H1 (cell line): ENCODE measurements at regions of chr1 and their contacts with region 1.

Region 1: GRCh38 chr1:209875515-209875914 is 47.7 kb downstream of the UTP25 start:
- DNase-seq: no peak
- H3K4me3 ChIP-seq: no peak overlapping the region
- H3K27ac ChIP-seq: no peak overlapping the region
- H3K4me1 ChIP-seq: no peaks in the 10 kb centered on the region
- H3K27me3 ChIP-seq: no peaks in the 10 kb centered on the region
- CTCF ChIP-seq: peak; percentile 31 to 59 (median 44)
- EP300 ChIP-seq: no peak
- POLR2A ChIP-seq: no peak
- RAD21 ChIP-seq: peak; percentile 55 to 64

Region 2: DNA sequence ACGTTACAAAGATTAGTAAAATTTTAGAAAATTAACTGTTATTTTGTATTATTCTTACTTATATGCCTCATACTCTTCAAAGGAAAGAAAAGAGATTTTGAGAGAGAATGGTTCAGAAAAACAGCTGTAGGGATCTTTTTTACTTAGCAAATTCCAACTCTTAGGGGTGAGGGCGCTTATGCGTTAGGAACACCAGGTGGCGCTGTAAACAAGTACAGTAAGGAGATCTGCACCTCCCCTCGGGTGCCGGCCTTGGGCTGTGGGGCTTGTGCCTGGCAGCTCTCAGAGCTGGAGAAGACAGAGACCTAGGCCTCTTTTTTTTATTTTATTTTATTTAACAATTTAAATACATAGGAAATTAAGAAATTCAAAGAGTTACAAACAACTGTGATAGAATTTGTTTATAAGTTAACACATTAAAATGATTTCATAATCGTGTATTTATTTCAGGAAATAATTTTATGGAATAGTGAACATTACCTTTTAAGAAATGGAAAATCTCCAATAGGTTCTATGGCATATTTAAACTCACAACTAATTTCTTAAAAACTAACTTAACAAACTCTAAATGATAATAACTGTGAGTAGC is 15.1 kb before region 1 on chr1:
- CTCF ChIA-PET with region 1: interaction called, 58 read pairs
- POLR2A ChIA-PET with region 1: no interaction called
- DNase-seq: peak in 1 of 2 experiments; percentile 82
- H3K4me3 ChIP-seq: no peak overlapping the region
- H3K27ac ChIP-seq: no peak overlapping the region
- H3K4me1 ChIP-seq: peaks cover 12 to 22% (median 17%) of the 10 kb centered on the region in 4 experiments
- H3K27me3 ChIP-seq: no peaks in the 10 kb centered on the region
- CTCF ChIP-seq: peak; percentile 65 to 88 (median 78)
- EP300 ChIP-seq: no peak
- POLR2A ChIP-seq: no peak
- RAD21 ChIP-seq: peak; percentile 86 to 90

Region 3: DNA sequence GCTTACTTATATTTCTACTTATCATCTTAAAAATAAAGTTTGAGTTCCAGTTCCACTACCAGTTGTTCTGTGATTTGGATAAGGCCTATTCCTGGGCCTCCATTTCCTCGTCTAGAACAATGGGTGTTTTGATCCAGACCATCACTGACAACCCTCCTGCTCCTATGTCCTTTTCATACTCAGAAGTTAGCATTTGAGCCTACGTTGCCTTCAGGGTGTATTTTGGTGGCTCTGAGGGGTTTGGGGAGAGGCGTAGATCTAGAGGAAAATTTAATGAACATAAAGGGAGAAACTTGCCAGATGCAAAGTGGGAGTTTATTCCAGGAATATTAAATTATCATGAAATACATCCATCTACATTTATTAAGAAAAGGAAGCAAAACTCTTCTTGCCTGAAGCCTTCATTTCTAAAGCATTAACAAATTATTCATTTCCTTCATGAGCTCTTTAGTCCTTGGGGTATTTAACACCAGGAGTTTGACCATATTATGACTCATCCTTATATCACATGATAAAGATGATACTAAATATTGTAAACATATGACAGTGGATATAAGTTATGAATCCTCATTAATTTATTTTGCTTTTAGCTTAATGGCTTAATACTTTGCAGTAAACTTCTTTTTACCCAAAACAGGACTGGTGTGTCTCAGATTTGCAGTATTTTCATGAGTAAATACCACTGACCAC is 15.3 kb after region 1 on chr1:
- CTCF ChIA-PET with region 1: interaction called, 11 read pairs
- POLR2A ChIA-PET with region 1: no interaction called
- DNase-seq: no peak
- H3K4me3 ChIP-seq: no peak overlapping the region
- H3K27ac ChIP-seq: no peak overlapping the region
- H3K4me1 ChIP-seq: no peaks in the 10 kb centered on the region
- H3K27me3 ChIP-seq: no peaks in the 10 kb centered on the region
- CTCF ChIP-seq: no peak
- EP300 ChIP-seq: no peak
- POLR2A ChIP-seq: no peak
- RAD21 ChIP-seq: no peak

Region 4: GRCh38 chr1:210061992-210062391 is 186.5 kb after region 1 on chr1:
- CTCF ChIA-PET with region 1: no interaction called
- POLR2A ChIA-PET with region 1: no interaction called
- DNase-seq: no peak
- H3K4me3 ChIP-seq: no peak overlapping the region
- H3K27ac ChIP-seq: no peak overlapping the region
- H3K4me1 ChIP-seq: no peaks in the 10 kb centered on the region
- H3K27me3 ChIP-seq: no peaks in the 10 kb centered on the region
- CTCF ChIP-seq: no peak
- EP300 ChIP-seq: no peak
- POLR2A ChIP-seq: no peak
- RAD21 ChIP-seq: no peak

Region 5: DNA sequence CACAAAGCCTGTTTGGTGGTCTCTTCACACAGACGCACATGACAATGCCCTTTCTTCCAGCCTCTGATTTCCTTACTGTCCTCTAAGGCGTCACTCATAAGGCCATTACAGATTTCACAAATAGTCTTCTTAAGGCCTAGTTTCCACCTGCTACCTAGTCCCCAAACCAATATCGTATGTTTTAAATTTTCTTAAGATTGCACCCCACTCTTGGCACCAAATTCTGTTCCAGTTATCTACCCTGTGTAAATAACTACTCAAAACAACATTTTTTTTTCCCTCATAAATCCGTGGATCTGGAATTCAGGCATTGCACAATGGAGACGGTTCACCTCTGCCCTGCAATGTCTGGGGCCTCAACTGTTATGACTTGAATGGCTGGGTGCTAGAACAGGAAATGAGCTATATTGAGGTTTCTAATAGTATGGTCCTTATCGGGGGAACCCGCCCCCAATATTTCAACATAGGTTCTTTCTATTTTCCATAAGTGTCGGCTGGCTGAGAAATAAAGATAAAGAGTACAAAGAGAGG is 320.2 kb after region 1 on chr1:
- CTCF ChIA-PET with region 1: no interaction called
- POLR2A ChIA-PET with region 1: no interaction called
- DNase-seq: no peak
- H3K4me3 ChIP-seq: no peak overlapping the region
- H3K27ac ChIP-seq: no peak overlapping the region
- H3K4me1 ChIP-seq: no peaks in the 10 kb centered on the region
- H3K27me3 ChIP-seq: no peaks in the 10 kb centered on the region
- CTCF ChIP-seq: no peak
- EP300 ChIP-seq: no peak
- POLR2A ChIP-seq: no peak
- RAD21 ChIP-seq: no peak